Breast epithelium (tissue), 4 donors: ENCODE measurements at regions of chr6 and their contacts with region 1.

Region 1: GRCh38 chr6:74964871-74965441 is 240.9 kb downstream of the COL12A1 start:
- DNase-seq: no peak
- H3K4me3 ChIP-seq: no peak overlapping the region
- H3K27ac ChIP-seq: no peak overlapping the region
- H3K4me1 ChIP-seq: no peaks in the 10 kb centered on the region
- H3K27me3 ChIP-seq: no peaks in the 10 kb centered on the region
- CTCF ChIP-seq: no peak
- POLR2A ChIP-seq: no peak

Region 2: DNA sequence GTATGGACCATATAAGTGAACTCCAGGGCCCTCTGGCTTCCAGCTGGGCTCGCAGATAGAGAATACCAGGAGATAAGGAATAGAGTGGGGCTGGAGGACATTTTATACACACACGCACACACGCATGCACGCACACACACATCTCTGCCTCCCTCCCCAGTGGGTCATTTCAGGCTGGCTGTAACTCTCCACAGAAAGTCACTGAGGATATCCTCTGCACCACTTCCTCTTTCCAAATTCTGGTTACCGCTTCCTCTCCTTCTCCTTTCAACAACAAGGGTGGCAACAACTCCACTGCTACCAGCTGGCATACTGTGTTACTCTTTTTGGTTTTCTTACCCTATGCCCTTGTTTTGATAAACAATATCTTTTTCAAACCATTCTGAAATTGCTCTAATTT is 39.3 kb before region 1 on chr6:
- intact Hi-C with region 1: loop called (anchors 2 kb)
- DNase-seq: no peak
- H3K4me3 ChIP-seq: no peak overlapping the region
- H3K27ac ChIP-seq: no peak overlapping the region
- H3K4me1 ChIP-seq: no peaks in the 10 kb centered on the region
- H3K27me3 ChIP-seq: no peaks in the 10 kb centered on the region
- CTCF ChIP-seq: no peak
- POLR2A ChIP-seq: no peak